Activated CD4-positive, alpha-beta T cell treated with anti-CD3 and anti-CD28 coated beads for 36 hours (primary cell): ENCODE measurements at regions of chr13 and their contacts with region 1.

Region 1: DNA sequence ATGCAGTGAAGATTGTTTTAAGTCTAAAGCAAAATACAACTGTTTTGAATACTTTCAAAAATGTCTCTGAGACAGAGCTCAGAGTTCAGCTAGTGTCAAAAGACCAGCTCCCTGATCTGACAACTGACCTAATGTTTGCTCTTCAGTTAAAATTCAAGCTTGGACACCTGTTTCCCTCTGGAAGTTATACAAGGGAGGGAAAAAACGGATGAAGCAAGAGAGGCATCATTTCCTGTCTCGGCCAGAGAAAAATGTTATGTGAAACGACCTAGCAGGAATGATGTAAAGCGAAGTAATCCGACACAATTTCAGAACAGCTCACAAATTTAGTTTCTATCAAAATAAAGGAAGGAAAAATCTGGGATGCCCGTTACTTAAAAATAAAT is 59.4 kb downstream of the ZAR1L start:
- DNase-seq: no peak
- ATAC-seq: no peak
- H3K4me3 Mint-ChIP-seq: no peak overlapping the region
- H3K27ac Mint-ChIP-seq: no peak overlapping the region
- H3K4me1 Mint-ChIP-seq: no peaks in the 10 kb centered on the region
- H3K27me3 Mint-ChIP-seq: no peaks in the 10 kb centered on the region

Region 2: GRCh38 chr13:31476266-31476665 is 779.5 kb before region 1 on chr13:
- CTCF ChIA-PET with region 1: no interaction called
- POLR2A ChIA-PET with region 1: no interaction called
- intact Hi-C with region 1: no loop called
- DNase-seq: no peak
- ATAC-seq: no peak
- H3K4me3 Mint-ChIP-seq: no peak overlapping the region
- H3K27ac Mint-ChIP-seq: no peak overlapping the region
- H3K4me1 Mint-ChIP-seq: no peaks in the 10 kb centered on the region
- H3K27me3 Mint-ChIP-seq: peaks cover 14% of the 10 kb centered on the region

Region 3: GRCh38 chr13:31996592-31996991 is 259.1 kb before region 1 on chr13:
- CTCF ChIA-PET with region 1: no interaction called
- POLR2A ChIA-PET with region 1: interaction called, 11 read pairs
- intact Hi-C with region 1: no loop called
- DNase-seq: no peak
- ATAC-seq: no peak
- H3K4me3 Mint-ChIP-seq: no peak overlapping the region
- H3K27ac Mint-ChIP-seq: no peak overlapping the region
- H3K4me1 Mint-ChIP-seq: no peaks in the 10 kb centered on the region
- H3K27me3 Mint-ChIP-seq: no peaks in the 10 kb centered on the region